Thyroid gland (tissue), 4 donors: ENCODE measurements at regions of chr19 and their contacts with region 1.

Region 1: DNA sequence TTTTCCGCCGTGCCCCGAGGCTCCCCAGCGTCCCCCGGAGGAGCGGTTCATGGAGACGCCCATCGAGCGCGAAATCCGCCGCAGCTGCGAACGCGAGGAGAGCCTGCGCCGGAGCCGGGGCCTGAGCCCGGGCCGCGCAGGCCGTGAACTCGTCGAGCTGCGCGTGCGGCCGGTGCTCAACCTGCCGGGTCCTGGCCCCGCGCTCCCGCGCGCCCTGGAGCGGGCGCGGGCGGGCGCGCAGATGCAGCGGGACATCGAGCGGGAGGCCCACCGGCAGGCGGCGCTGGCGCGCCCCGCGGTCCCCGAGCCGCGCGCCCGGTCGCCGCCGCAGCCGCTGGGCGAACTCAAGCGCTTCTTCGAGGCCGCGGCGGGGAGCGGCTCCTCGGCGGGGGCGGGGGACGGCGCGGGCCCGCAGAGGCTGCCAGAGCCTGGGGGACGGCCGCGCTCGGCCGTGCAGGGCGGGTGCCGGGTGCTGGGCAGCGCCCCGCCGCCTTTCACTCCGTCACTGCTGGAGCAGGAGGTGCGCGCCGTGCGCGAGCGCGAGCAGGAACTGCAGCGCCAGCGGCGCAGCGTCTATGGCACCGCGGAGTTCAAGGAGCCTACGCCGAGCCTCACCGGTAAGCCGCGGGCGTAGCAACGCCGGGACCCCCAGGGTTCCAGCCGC is 807 bp downstream of the MISP3 start:
- DNase-seq: peak; percentile 81 to 83
- H3K4me3 ChIP-seq: peak overlapping the region; percentile 35 to 64 (median 38)
- H3K27ac ChIP-seq: peak overlapping the region; percentile 67 to 90 (median 85)
- H3K4me1 ChIP-seq: peaks cover 15 to 19% of the 10 kb centered on the region in 2 donors
- H3K27me3 ChIP-seq: no peaks in the 10 kb centered on the region
- CTCF ChIP-seq: peak in 3 of 6 experiments; percentile 81 to 94 (median 89)
- POLR2A ChIP-seq: peak in 1 of 2 donors; percentile 56

Region 2: DNA sequence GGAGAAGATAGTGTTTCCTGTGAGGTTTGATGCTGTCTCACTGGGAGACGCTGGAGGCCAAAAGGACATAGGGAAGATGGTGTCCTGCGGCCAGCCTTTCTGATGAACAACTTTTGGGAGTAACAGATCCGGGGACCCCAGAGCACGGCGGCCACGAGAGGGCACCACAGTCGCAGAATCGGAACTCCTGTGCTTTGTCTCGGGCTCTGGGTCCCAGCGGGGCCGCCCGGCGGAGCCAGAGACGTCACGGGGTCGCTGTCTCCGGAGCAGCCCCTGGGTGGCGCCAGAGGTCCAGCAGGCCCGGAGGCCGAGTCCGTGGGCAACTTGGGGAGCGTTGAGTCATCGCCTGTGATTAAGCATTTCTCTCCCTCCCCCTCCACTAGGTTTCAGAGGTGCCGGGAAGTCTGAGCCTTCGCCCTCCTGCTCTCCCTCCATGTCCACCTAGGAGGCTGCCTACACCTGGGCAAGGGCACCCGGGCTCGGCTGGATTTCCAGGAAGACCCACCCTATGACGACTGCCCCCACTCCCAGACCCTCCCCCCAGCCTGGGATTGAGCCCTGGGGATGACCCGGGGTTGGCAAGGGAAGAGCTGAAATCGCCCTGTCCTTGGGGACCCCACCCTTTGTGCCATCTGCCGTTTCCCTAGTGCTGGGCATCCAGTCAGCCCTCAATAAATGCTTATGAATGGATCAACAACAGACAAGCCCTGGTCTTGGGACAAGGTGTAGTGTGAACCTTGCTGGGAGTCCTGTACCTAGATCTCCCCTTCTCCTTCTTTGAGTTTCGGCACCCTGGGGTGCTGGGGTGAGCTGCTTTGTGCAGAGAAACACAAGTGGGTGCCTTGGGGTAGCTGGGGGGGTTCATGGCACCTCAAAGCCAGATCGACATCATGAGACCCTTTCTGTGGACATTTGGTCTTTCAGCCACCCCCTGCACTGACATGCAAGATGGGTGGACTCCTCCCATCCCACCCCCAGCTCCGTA is 193.0 kb before region 1 on chr19:
- intact Hi-C with region 1: loop called (anchors 2 kb)
- DNase-seq: peak; percentile 98
- H3K4me3 ChIP-seq: no peak overlapping the region
- H3K27ac ChIP-seq: peak overlapping the region; percentile 72 to 82 (median 79)
- H3K4me1 ChIP-seq: peaks cover 6 to 32% of the 10 kb centered on the region in 2 donors
- H3K27me3 ChIP-seq: no peaks in the 10 kb centered on the region
- CTCF ChIP-seq: peak; percentile 94 to 100 (median 99)
- POLR2A ChIP-seq: peak in 1 of 2 donors; percentile 16

Region 3: DNA sequence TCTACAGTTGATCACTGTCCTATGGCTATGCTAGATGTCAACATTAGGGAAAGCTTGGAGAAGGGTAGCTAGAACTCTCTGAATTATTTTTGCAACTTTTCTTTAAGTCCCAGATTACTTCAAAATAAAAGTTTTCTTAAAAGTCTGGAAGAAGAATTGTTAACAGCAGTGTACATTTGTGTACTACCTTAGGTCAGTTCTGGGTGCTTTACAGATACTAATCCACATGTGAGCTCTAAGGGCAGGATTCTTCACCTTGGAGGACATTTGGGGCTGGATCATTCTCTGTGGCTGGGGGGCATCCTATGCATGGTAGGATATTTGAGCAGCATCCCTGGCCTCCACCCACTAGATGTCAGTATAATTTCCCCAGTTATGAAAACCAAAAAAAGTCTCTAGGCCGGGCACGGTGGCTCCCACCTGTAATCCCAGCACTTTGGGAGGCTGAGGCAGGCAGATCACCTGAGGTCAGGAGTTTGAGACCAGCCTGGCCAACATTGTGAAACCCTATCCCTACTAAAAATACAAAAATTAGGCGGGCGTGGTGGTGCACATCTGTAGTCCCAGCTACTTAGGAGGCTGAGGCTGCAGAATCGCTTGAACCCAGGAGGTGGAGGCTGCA is 170.3 kb before region 1 on chr19:
- intact Hi-C with region 1: no loop called
- DNase-seq: no peak
- H3K4me3 ChIP-seq: no peak overlapping the region
- H3K27ac ChIP-seq: no peak overlapping the region
- H3K4me1 ChIP-seq: peaks cover 14% of the 10 kb centered on the region in 2 donors
- H3K27me3 ChIP-seq: no peaks in the 10 kb centered on the region
- CTCF ChIP-seq: peak in 1 of 6 experiments; percentile 28
- POLR2A ChIP-seq: no peak

Region 4: DNA sequence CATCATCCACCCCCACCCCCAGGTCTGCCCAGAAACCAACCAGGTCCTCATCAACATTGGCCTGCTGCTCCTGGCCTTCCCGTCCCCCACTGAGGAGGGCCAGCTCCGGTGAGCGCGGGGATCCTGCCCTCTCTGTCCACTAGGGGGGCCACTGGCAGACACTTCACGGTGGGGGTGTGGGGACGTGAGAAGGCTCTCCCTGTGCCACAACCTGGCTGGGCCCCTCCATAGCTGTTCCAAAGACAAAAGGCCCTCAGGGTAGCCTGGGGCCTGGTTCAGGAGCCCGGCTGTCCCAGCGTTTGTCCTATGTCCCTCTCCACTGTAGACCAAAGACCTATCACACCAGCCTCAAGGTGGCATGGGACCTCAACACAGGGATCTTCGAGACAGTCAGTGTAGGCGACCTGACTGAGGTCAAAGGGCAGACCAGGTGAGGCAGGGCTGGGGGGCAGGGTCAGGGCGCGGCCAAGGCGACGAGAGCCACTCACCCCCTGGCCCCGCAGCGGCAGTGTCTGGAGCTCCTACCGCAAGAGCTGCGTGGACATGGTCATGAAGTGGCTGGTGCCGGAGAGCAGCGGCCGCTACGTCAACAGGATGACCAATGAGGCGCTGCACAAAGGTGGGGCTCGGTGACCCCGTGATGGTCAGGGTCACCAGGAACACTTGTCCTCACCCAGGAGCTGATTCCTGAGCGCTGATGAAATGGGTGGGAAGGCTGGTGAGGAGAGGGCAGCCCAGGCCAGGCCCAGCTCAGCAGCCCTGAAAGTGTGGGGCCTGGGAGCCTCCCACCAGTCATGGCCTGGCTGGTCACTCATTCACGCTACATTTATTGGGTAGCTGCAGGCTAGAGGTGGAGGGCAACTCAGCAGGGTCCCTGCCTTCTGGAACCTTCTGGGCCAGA is 113.2 kb before region 1 on chr19:
- intact Hi-C with region 1: loop called (anchors 5 kb)
- DNase-seq: no peak
- H3K4me3 ChIP-seq: no peak overlapping the region
- H3K27ac ChIP-seq: no peak overlapping the region
- H3K4me1 ChIP-seq: no peaks in the 10 kb centered on the region
- H3K27me3 ChIP-seq: no peaks in the 10 kb centered on the region
- CTCF ChIP-seq: peak in 1 of 6 experiments; percentile 8
- POLR2A ChIP-seq: no peak